ENCODE measurements at regions of chr10 and their contacts with region 1.

Region 1: GRCh38 chr10:63157845-63158624 is 24.9 kb downstream of the NRBF2 start:
- DNase-seq: peak in 7 of 9 donors; percentile 43 to 71 (median 65)
- ATAC-seq: peak; percentile 84
- H3K4me3 ChIP-seq: no peak overlapping the region
- H3K4me3 Mint-ChIP-seq: no peak overlapping the region
- H3K27ac ChIP-seq: no peak overlapping the region
- H3K27ac Mint-ChIP-seq: peak overlapping the region in 2 of 9 donors; percentile 2 to 30
- H3K4me1 ChIP-seq: no peaks in the 10 kb centered on the region
- H3K4me1 Mint-ChIP-seq: peaks cover 6 to 18% (median 11%) of the 10 kb centered on the region in 7 donors
- H3K27me3 ChIP-seq: no peaks in the 10 kb centered on the region
- H3K27me3 Mint-ChIP-seq: no peaks in the 10 kb centered on the region

Region 2: DNA sequence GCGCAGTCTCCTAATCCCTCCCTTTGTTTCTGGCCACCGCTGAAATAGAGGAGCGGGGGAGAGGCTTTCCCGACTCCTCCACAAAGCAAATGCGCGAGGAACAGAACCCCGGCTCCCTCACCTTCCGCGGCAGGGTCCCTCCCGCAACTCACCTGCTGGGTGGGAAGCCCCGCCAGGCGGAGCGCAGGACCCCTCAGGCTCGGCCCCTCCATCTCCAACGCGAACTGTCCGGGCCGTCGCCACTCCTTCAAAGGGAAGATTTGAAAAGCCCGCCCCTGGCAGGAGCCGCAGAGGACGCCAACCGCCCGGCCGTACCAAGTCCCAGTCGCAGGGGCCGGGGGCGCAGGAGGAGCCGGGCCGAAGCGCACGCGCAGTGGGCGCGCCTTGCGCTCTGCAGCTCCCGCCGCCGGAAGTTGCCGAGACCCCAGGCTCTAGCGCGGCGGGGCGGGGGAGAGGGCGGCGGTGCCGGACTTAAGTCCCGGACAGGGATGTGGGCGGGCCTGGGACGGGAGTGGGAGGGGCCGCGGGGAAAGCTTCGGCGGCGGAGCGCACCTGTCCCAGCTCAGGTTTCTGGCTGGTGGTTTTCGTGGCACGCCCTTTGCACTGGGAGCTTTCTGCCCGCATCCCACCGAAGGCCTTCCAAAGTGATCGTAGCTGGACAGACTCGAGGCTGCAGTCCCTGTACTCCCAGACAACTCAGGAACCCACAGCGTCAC is 889.5 kb before region 1 on chr10 and contains the start of gene RTKN2:
- CTCF ChIA-PET with region 1: no interaction called
- POLR2A ChIA-PET with region 1: no interaction called
- intact Hi-C with region 1: loop called (anchors 2 to 5 kb)
- DNase-seq: peak; percentile 52 to 76 (median 64)
- ATAC-seq: peak; percentile 89
- H3K4me3 ChIP-seq: peak within 1 kb of the TSS; percentile 69
- H3K4me3 Mint-ChIP-seq: peak within 1 kb of the TSS; percentile 84 to 96 (median 88)
- H3K27ac ChIP-seq: peak within 1 kb of the TSS; percentile 12
- H3K27ac Mint-ChIP-seq: peak within 1 kb of the TSS in 8 of 9 donors; percentile 8 to 75 (median 46)
- H3K4me1 ChIP-seq: peaks cover 0 to 5% of the 10 kb centered on the region in 2 donors
- H3K4me1 Mint-ChIP-seq: peaks cover 9 to 19% (median 14%) of the 10 kb centered on the region in 7 donors
- H3K27me3 ChIP-seq: peaks cover 0 to 9% of the 10 kb centered on the region in 2 donors
- H3K27me3 Mint-ChIP-seq: peaks cover 4 to 43% (median 16%) of the 10 kb centered on the region in 5 donors
- total RNA-seq, gene RTKN2: 1.4 to 7.8 (median 3.0) TPM

Region 3: GRCh38 chr10:62492012-62492869 is 665.8 kb before region 1 on chr10:
- CTCF ChIA-PET with region 1: interaction called, 3 read pairs
- POLR2A ChIA-PET with region 1: no interaction called
- intact Hi-C with region 1: loop called (anchors 1 to 2 kb)
- DNase-seq: peak in 7 of 9 donors; percentile 14 to 53 (median 40)
- ATAC-seq: peak; percentile 54
- H3K4me3 ChIP-seq: no peak overlapping the region
- H3K4me3 Mint-ChIP-seq: no peak overlapping the region
- H3K27ac ChIP-seq: no peak overlapping the region
- H3K27ac Mint-ChIP-seq: no peak overlapping the region
- H3K4me1 ChIP-seq: no peaks in the 10 kb centered on the region
- H3K4me1 Mint-ChIP-seq: peaks cover 0 to 2% (median 0%) of the 10 kb centered on the region in 7 donors
- H3K27me3 ChIP-seq: no peaks in the 10 kb centered on the region
- H3K27me3 Mint-ChIP-seq: peaks cover 0 to 29% (median 4%) of the 10 kb centered on the region in 5 donors

Region 4: GRCh38 chr10:62594093-62594520 is 563.9 kb before region 1 on chr10:
- CTCF ChIA-PET with region 1: interaction called, 18 read pairs
- POLR2A ChIA-PET with region 1: no interaction called
- intact Hi-C with region 1: loop called (anchors 1 kb)
- DNase-seq: peak in 8 of 9 donors; percentile 22 to 58 (median 40)
- ATAC-seq: peak; percentile 84
- H3K4me3 ChIP-seq: no peak overlapping the region
- H3K4me3 Mint-ChIP-seq: no peak overlapping the region
- H3K27ac ChIP-seq: no peak overlapping the region
- H3K27ac Mint-ChIP-seq: no peak overlapping the region
- H3K4me1 ChIP-seq: no peaks in the 10 kb centered on the region
- H3K4me1 Mint-ChIP-seq: peaks cover 0 to 4% (median 0%) of the 10 kb centered on the region in 7 donors
- H3K27me3 ChIP-seq: no peaks in the 10 kb centered on the region
- H3K27me3 Mint-ChIP-seq: peaks cover 0 to 26% (median 10%) of the 10 kb centered on the region in 5 donors

Region 5: DNA sequence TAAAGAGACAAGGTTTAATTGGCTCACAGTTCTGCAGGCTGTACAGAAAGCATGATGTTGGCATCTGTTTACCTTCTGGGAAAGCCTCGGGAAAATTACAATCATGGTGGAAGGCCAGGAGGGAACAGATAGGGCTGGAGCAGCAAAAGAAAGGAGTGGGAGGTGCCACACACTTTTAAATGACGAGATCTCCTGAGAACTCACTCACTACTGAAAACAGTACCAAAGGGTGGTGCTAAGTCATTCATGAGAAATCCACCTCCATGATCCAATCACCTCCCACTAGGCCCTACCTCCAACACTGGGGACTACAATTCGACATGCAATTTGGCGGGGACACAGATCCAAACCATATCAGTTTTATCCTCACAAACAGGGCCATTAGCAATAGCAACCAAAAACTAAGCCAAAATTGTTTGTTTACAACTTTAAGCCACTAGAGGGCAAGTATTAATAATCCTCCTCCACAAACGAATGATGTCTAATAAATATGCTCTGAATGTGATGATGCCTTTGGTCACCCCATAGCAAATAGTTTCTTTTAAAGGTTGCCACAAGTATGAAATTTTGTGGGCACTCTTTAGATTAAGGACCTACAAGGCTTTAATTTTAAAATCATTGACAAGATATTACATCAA is 154.1 kb before region 1 on chr10:
- CTCF ChIA-PET with region 1: interaction called, 5 read pairs
- POLR2A ChIA-PET with region 1: no interaction called
- intact Hi-C with region 1: loop called in 1 of 2 experiments (anchors 1 kb)
- DNase-seq: no peak
- ATAC-seq: no peak
- H3K4me3 ChIP-seq: no peak overlapping the region
- H3K4me3 Mint-ChIP-seq: no peak overlapping the region
- H3K27ac ChIP-seq: no peak overlapping the region
- H3K27ac Mint-ChIP-seq: no peak overlapping the region
- H3K4me1 ChIP-seq: no peaks in the 10 kb centered on the region
- H3K4me1 Mint-ChIP-seq: no peaks in the 10 kb centered on the region
- H3K27me3 ChIP-seq: no peaks in the 10 kb centered on the region
- H3K27me3 Mint-ChIP-seq: peaks cover 6 to 26% (median 16%) of the 10 kb centered on the region in 5 donors

Region 6: GRCh38 chr10:63145782-63146181 is 12.3 kb before region 1 on chr10:
- CTCF ChIA-PET with region 1: interaction called, 12 read pairs
- POLR2A ChIA-PET with region 1: no interaction called
- intact Hi-C with region 1: no loop called
- DNase-seq: no peak
- ATAC-seq: no peak
- H3K4me3 ChIP-seq: no peak overlapping the region
- H3K4me3 Mint-ChIP-seq: peak overlapping the region in 1 of 10 donors; percentile 29
- H3K27ac ChIP-seq: no peak overlapping the region
- H3K27ac Mint-ChIP-seq: peak overlapping the region in 3 of 9 donors; percentile 36 to 57 (median 46)
- H3K4me1 ChIP-seq: no peaks in the 10 kb centered on the region
- H3K4me1 Mint-ChIP-seq: peaks cover 34 to 77% (median 71%) of the 10 kb centered on the region in 7 donors
- H3K27me3 ChIP-seq: no peaks in the 10 kb centered on the region
- H3K27me3 Mint-ChIP-seq: no peaks in the 10 kb centered on the region

Measured in naive thymus-derived CD4-positive, alpha-beta T cell (primary cell).